Mucosa of descending colon (tissue), 3 donors: ENCODE measurements at regions of chr10 and their contacts with region 1.

Region 1: GRCh38 chr10:95693668-95694534 is at the start of gene TCTN3:
- DNase-seq: peak; percentile 97 to 98 (median 97)
- ATAC-seq: peak; percentile 99
- H3K4me3 ChIP-seq: peak within 1 kb of the TSS; percentile 49
- H3K4me1 ChIP-seq: peaks cover 5% of the 10 kb centered on the region
- CTCF ChIP-seq: peak; percentile 99
- total RNA-seq, gene TCTN3: 20.7 to 35.4 (median 31.6) TPM

Region 2: GRCh38 chr10:95841661-95842498 is 148.0 kb after region 1 on chr10:
- intact Hi-C with region 1: loop called (anchors 5 kb)
- DNase-seq: peak in 1 of 3 donors; percentile 90
- ATAC-seq: peak; percentile 70
- H3K4me3 ChIP-seq: no peak overlapping the region
- H3K4me1 ChIP-seq: peaks cover 3% of the 10 kb centered on the region
- CTCF ChIP-seq: peak; percentile 28